ENCODE measurements at regions of chr17 and their contacts with region 1.

Region 1: GRCh38 chr17:4143563-4144421 is 795 bp downstream of the CYB5D2 start:
- DNase-seq: peak; percentile 84
- ATAC-seq: peak; percentile 70
- H3K4me3 Mint-ChIP-seq: peak overlapping the region; percentile 98
- H3K27ac Mint-ChIP-seq: peak overlapping the region; percentile 99
- H3K4me1 Mint-ChIP-seq: peaks cover 37% of the 10 kb centered on the region
- H3K27me3 Mint-ChIP-seq: no peaks in the 10 kb centered on the region
- CTCF ChIP-seq: no peak

Region 2: DNA sequence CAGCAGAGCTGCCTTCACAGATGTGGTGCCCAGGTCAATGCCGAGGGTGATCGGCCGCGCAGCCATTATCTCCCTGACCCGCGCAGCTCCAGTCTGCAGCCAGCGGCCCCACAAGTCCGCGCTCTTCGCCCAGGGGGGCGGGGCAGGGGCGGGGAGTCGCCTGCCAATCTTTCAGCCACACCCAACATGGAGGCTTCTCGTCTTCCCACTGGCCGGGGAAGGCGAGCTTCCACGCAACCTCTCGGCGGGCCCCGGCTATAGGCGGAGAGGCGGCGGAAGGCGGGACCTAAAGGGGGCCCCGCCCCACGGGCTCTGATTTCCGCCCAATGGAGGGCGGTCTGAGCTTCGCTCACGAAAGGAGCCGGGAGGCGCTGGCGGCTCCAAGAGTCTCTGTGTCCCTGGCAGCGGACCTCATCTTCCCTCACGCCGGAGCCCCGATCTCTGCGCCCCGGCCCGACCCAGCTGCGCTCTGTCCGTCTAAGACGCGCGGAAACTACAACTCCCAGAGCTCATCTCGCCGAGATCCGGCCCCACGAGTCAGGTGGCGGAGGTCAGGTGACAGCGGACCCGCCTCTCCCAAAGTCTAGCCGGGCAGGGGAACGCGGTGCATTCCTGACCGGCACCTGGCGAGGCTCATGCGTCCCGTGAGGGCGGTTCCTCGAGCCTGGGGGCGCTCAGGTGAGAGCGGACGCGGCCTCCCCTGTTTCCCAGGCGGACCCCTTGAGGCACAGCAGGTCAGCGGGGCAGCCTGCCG is 507.5 kb before region 1 on chr17 and contains the starts of genes CTNS and SHPK:
- CTCF ChIA-PET with region 1: no interaction called
- POLR2A ChIA-PET with region 1: interaction called, 14 read pairs
- intact Hi-C with region 1: loop called (anchors 1 kb)
- DNase-seq: peak; percentile 93
- ATAC-seq: peak; percentile 98
- H3K4me3 Mint-ChIP-seq: peak within 1 kb of the TSS; percentile 98
- H3K27ac Mint-ChIP-seq: peak within 1 kb of the TSS; percentile 100
- H3K4me1 Mint-ChIP-seq: peaks cover 26% of the 10 kb centered on the region
- H3K27me3 Mint-ChIP-seq: no peaks in the 10 kb centered on the region
- CTCF ChIP-seq: no peak
- total RNA-seq, gene CTNS: 12.8 and 13.5 TPM in 2 replicates
- total RNA-seq, gene SHPK: 8.1 and 9.5 TPM in 2 replicates

Region 3: GRCh38 chr17:3986270-3986938 is 157.4 kb before region 1 on chr17:
- CTCF ChIA-PET with region 1: no interaction called
- POLR2A ChIA-PET with region 1: no interaction called
- intact Hi-C with region 1: no loop called
- DNase-seq: no peak
- ATAC-seq: peak; percentile 18
- H3K4me3 Mint-ChIP-seq: no peak overlapping the region
- H3K27ac Mint-ChIP-seq: no peak overlapping the region
- H3K4me1 Mint-ChIP-seq: peaks cover 8% of the 10 kb centered on the region
- H3K27me3 Mint-ChIP-seq: peaks cover 2% of the 10 kb centered on the region
- CTCF ChIP-seq: no peak

Region 4: DNA sequence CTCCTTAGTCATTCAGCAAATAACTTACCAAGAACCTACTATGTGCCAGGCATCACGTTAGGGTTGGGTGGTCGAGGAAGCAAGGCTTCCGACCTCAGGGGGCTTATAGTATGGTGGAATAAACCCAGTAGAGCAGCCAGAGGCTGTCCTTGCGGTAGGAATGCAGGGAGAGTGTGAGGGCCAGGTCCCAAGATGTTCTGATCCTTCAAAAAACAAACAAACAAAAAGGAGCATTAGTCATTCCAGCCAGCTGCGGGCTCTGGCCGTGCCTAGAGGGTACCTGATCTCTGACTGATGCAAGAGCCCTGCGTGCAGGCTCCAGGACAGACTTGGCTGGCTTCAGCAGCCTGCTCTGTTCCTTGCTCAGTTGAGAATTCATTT is 17.4 kb after region 1 on chr17:
- CTCF ChIA-PET with region 1: interaction called, 3 read pairs
- POLR2A ChIA-PET with region 1: interaction called, 46 read pairs
- intact Hi-C with region 1: no loop called
- DNase-seq: no peak
- ATAC-seq: no peak
- H3K4me3 Mint-ChIP-seq: no peak overlapping the region
- H3K27ac Mint-ChIP-seq: no peak overlapping the region
- H3K4me1 Mint-ChIP-seq: peaks cover 11% of the 10 kb centered on the region
- H3K27me3 Mint-ChIP-seq: no peaks in the 10 kb centered on the region
- CTCF ChIP-seq: no peak

Region 5: DNA sequence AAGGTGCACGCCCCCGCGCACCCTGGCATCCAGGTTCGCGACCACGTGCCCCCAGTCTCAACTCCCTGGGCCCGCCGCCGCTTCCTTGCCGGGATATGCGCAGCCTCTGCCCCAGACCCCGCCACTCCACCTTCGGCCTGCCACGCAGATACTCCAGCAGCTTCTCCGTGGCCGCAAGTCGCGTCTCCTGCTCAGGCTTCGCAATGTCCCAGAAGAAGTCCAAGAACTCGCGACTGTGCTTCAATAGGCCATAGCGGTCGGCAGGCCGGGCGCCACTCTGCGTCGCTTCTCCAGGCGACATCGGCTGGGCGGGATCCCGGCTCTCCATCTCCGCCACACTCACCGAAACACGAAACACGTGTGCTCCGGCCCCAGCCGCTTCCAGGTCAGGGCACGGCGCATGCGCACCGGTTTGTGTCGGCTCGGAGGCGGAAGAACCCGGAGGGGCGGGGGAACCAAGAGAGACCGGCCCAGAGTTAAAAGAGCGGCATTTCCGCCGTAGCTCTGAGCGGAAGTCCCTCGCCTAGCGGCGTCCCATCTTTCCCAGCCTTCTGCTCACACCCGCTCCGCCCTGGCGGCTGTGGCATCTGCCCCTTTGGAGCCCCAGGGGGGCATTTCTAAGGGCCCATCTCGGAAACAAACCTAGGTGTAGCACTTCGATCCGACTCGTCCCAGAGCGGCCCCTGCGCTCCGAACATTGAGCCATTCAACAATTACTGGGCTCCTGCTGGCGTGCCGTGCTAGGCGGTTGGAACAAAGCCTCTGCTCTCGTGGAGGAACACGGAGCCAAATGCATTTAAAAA is 411.4 kb after region 1 on chr17 and contains the start of gene MYBBP1A:
- CTCF ChIA-PET with region 1: no interaction called
- POLR2A ChIA-PET with region 1: interaction called, 13 read pairs
- intact Hi-C with region 1: no loop called
- DNase-seq: peak; percentile 94
- ATAC-seq: peak; percentile 95
- H3K4me3 Mint-ChIP-seq: peak within 1 kb of the TSS; percentile 96
- H3K27ac Mint-ChIP-seq: peak within 1 kb of the TSS; percentile 98
- H3K4me1 Mint-ChIP-seq: peaks cover 28% of the 10 kb centered on the region
- H3K27me3 Mint-ChIP-seq: no peaks in the 10 kb centered on the region
- CTCF ChIP-seq: no peak
- total RNA-seq, gene MYBBP1A: 90.3 and 108 TPM in 2 replicates

Region 6: GRCh38 chr17:4948931-4949320 is 805.1 kb after region 1 on chr17:
- CTCF ChIA-PET with region 1: no interaction called
- POLR2A ChIA-PET with region 1: interaction called, 14 read pairs
- intact Hi-C with region 1: loop called (anchors 5 kb)
- DNase-seq: peak; percentile 74
- ATAC-seq: peak; percentile 45
- H3K4me3 Mint-ChIP-seq: peak overlapping the region; percentile 100
- H3K27ac Mint-ChIP-seq: peak overlapping the region; percentile 100
- H3K4me1 Mint-ChIP-seq: peaks cover 44% of the 10 kb centered on the region
- H3K27me3 Mint-ChIP-seq: peaks cover 2% of the 10 kb centered on the region
- CTCF ChIP-seq: no peak